Activated B cell treated with CpG ODN at 0.5 μM for 24 hours (primary cell): ENCODE measurements at regions of chr2 and their contacts with region 1.

Region 1: GRCh38 chr2:164841719-164842623 is at the start of gene COBLL1:
- DNase-seq: peak; percentile 65
- ATAC-seq: peak; percentile 65
- H3K4me3 Mint-ChIP-seq: peak within 1 kb of the TSS; percentile 97
- H3K27ac Mint-ChIP-seq: peak within 1 kb of the TSS; percentile 91
- H3K4me1 Mint-ChIP-seq: peaks cover 44% of the 10 kb centered on the region
- H3K27me3 Mint-ChIP-seq: no peaks in the 10 kb centered on the region
- CTCF ChIP-seq: no peak
- total RNA-seq, gene COBLL1: 182 and 222 TPM in 2 replicates

Region 2: GRCh38 chr2:164620873-164621626 is 220.9 kb before region 1 on chr2 and contains the start of gene GRB14:
- CTCF ChIA-PET with region 1: no interaction called
- POLR2A ChIA-PET with region 1: no interaction called
- intact Hi-C with region 1: no loop called
- DNase-seq: no peak
- ATAC-seq: no peak
- H3K4me3 Mint-ChIP-seq: peak within 1 kb of the TSS; percentile 78
- H3K27ac Mint-ChIP-seq: no peak within 1 kb of the TSS
- H3K4me1 Mint-ChIP-seq: peaks cover 6% of the 10 kb centered on the region
- H3K27me3 Mint-ChIP-seq: peaks cover 39% of the 10 kb centered on the region
- CTCF ChIP-seq: no peak
- total RNA-seq, gene GRB14: 0.71 TPM in 1 of 2 replicates, not detected in the other

Region 3: DNA sequence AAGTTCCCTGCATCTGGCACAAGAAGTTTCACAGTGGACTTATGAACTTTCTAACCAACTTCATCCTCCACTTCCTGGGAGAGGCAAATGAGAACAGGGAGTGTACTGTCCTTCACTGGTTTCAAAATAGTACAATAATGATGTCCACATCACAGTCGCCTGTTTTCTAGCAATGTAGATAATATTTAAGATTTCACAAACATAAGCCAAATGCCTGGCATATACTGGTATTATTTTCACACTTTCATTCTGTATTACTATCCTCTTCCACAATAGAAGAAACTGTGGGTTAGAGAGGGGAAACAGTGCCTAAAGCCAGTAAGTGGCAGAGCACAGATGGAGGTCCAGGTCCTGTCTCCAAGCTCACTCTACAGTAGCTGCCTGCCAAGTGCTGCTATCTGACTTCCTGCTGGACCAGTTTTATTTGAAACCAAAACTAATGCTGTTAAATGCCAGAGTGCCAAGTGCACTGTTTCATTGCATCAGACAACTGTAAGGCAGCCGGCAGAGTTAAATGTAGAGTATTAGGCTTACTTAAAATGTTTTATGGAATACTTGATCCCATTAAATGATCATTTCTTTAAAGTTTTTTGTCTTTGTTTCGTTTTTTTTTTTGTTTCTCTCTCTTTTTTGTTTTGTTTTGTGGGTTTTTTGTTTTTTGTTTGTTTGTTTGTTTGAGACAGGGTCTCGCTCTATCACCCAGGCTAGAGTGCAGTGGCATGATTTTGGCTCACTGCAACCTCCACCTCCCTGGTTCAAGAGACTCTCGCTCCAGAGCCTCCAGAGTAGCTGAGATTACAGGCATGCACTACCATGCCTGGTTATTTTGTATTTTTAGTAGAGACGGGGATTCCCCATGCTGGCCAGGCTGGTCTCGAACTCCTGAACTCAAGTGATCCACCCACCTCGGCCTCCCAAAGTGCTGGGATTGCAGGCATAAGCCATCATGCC is 15.4 kb before region 1 on chr2:
- CTCF ChIA-PET with region 1: interaction called, 3 read pairs
- POLR2A ChIA-PET with region 1: interaction called, 14 read pairs
- intact Hi-C with region 1: loop called (anchors 1 kb)
- DNase-seq: no peak
- ATAC-seq: peak; percentile 91
- H3K4me3 Mint-ChIP-seq: peak overlapping the region; percentile 69
- H3K27ac Mint-ChIP-seq: peak overlapping the region; percentile 85
- H3K4me1 Mint-ChIP-seq: peaks cover 30% of the 10 kb centered on the region
- H3K27me3 Mint-ChIP-seq: no peaks in the 10 kb centered on the region
- CTCF ChIP-seq: no peak

Region 4: GRCh38 chr2:164868563-164869419 is 26.8 kb after region 1 on chr2:
- CTCF ChIA-PET with region 1: interaction called, 3 read pairs
- POLR2A ChIA-PET with region 1: interaction called, 15 read pairs
- intact Hi-C with region 1: loop called (anchors 1 kb)
- DNase-seq: no peak
- ATAC-seq: no peak
- H3K4me3 Mint-ChIP-seq: no peak overlapping the region
- H3K27ac Mint-ChIP-seq: peak overlapping the region; percentile 32
- H3K4me1 Mint-ChIP-seq: peaks cover 41% of the 10 kb centered on the region
- H3K27me3 Mint-ChIP-seq: no peaks in the 10 kb centered on the region
- CTCF ChIP-seq: no peak

Region 5: GRCh38 chr2:164896634-164897355 is 54.8 kb after region 1 on chr2:
- CTCF ChIA-PET with region 1: interaction called, 3 read pairs
- POLR2A ChIA-PET with region 1: interaction called, 6 read pairs
- intact Hi-C with region 1: loop called (anchors 2 kb)
- DNase-seq: no peak
- ATAC-seq: peak; percentile 97
- H3K4me3 Mint-ChIP-seq: no peak overlapping the region
- H3K27ac Mint-ChIP-seq: peak overlapping the region; percentile 68
- H3K4me1 Mint-ChIP-seq: peaks cover 19% of the 10 kb centered on the region
- H3K27me3 Mint-ChIP-seq: no peaks in the 10 kb centered on the region
- CTCF ChIP-seq: no peak

Region 6: DNA sequence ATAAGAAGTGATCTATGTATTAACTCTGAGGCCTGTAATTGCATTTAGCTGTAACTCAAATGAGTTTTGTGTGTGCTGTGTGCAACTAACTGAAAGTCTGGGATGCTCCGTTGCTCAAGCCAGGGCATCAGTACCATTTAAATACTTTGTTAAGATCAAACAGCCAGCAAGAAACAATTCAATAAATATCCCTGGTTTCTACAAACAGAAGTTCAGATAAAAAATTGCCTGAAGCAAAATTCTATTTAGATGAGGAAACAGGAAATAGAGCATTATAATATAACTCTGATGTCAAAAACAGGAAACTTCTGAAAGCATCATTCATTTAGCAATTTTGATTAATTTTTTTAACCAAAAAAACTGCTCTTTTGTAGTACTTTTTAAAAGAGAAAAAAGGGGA is 132.2 kb after region 1 on chr2:
- CTCF ChIA-PET with region 1: no interaction called
- POLR2A ChIA-PET with region 1: no interaction called
- intact Hi-C with region 1: loop called (anchors 5 kb)
- DNase-seq: no peak
- ATAC-seq: no peak
- H3K4me3 Mint-ChIP-seq: peak overlapping the region; percentile 32
- H3K27ac Mint-ChIP-seq: peak overlapping the region; percentile 57
- H3K4me1 Mint-ChIP-seq: peaks cover 85% of the 10 kb centered on the region
- H3K27me3 Mint-ChIP-seq: no peaks in the 10 kb centered on the region
- CTCF ChIP-seq: no peak

Region 7: GRCh38 chr2:165794536-165794928 is 952.6 kb after region 1 on chr2:
- CTCF ChIA-PET with region 1: no interaction called
- POLR2A ChIA-PET with region 1: no interaction called
- intact Hi-C with region 1: loop called (anchors 1 kb)
- DNase-seq: no peak
- ATAC-seq: peak; percentile 87
- H3K4me3 Mint-ChIP-seq: peak overlapping the region; percentile 97
- H3K27ac Mint-ChIP-seq: peak overlapping the region; percentile 96
- H3K4me1 Mint-ChIP-seq: peaks cover 36% of the 10 kb centered on the region
- H3K27me3 Mint-ChIP-seq: no peaks in the 10 kb centered on the region
- CTCF ChIP-seq: no peak